Mucosa of descending colon (tissue), 3 donors: ENCODE measurements at regions of chr20 and their contacts with region 1.

Region 1: GRCh38 chr20:4076671-4077070 is 61.3 kb upstream of the RNF24 start:
- DNase-seq: no peak
- ATAC-seq: no peak
- H3K4me3 ChIP-seq: no peak overlapping the region
- H3K4me1 ChIP-seq: no peaks in the 10 kb centered on the region
- CTCF ChIP-seq: no peak

Region 2: GRCh38 chr20:3679749-3680700 is 396.6 kb before region 1 on chr20:
- intact Hi-C with region 1: loop called in 1 of 2 experiments (anchors 10 kb)
- DNase-seq: peak in 2 of 3 donors; percentile 15 to 44
- ATAC-seq: peak; percentile 17
- H3K4me3 ChIP-seq: no peak overlapping the region
- H3K4me1 ChIP-seq: no peaks in the 10 kb centered on the region
- CTCF ChIP-seq: no peak

Region 3: DNA sequence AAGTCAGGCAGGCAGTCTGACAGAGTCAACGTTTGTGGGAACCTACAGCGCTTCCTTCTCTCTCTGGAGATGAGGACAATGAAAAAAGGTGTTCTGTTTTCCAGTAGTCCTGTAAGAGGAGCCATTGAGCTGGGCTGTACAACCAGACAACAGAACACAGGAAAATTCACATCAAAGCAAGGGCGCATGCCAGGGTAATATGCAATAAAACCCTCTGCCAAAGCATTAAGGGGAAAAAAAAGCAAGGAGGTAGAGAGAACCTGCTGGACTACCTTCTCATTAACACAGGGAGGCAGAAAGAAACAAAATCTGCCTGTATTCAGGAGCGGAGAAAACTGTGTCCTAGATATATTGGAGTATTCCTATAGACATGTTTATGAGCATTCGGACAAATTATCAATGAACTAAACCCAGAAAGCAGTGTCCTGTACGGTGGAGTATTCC is 62.6 kb before region 1 on chr20:
- intact Hi-C with region 1: loop called (anchors 5 to 10 kb)
- DNase-seq: peak in 1 of 3 donors; percentile 81
- ATAC-seq: peak; percentile 72
- H3K4me3 ChIP-seq: no peak overlapping the region
- H3K4me1 ChIP-seq: peaks cover 8% of the 10 kb centered on the region
- CTCF ChIP-seq: peak; percentile 32